Right lobe of liver (tissue), 6 donors: ENCODE measurements at regions of chr12 and their contacts with region 1.

Region 1: GRCh38 chr12:125330645-125331341 is 265.6 kb downstream of the AACS start:
- DNase-seq: peak; percentile 66 to 77 (median 73)
- ATAC-seq: peak; percentile 97 to 100 (median 98)
- H3K4me3 ChIP-seq: peak overlapping the region; percentile 13 to 51 (median 50)
- H3K27ac ChIP-seq: no peak overlapping the region
- H3K4me1 ChIP-seq: peaks cover 0 to 4% (median 0%) of the 10 kb centered on the region in 4 donors
- H3K27me3 ChIP-seq: no peaks in the 10 kb centered on the region
- CTCF ChIP-seq: peak; percentile 84 to 92 (median 89)
- POLR2A ChIP-seq: no peak

Region 2: DNA sequence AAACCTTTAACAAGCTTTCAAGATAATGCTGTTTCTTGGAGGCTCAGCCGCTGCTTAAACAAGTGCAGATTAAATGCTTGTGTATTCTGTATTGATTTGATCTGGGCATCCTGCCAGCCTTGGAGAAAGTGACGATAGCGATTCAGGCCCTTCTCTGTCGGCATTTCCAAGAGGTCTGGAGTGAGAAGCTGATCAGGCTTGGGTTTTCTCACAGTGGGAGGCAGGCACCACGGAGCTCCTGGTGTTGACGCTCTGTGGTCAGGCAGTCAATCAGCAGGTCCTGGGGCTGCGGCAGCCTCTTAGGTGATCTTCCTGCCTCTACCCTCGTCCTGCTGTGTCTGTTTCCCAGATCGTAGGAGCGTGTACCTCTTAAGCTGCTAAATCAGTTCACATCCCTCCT is 110.4 kb before region 1 on chr12:
- intact Hi-C with region 1: no loop called
- DNase-seq: peak in 2 of 3 donors; percentile 35 to 80
- ATAC-seq: peak; percentile 45 to 89 (median 76)
- H3K4me3 ChIP-seq: no peak overlapping the region
- H3K27ac ChIP-seq: no peak overlapping the region
- H3K4me1 ChIP-seq: peaks cover 0 to 9% (median 0%) of the 10 kb centered on the region in 4 donors
- H3K27me3 ChIP-seq: no peaks in the 10 kb centered on the region
- CTCF ChIP-seq: no peak
- POLR2A ChIP-seq: no peak

Region 3: DNA sequence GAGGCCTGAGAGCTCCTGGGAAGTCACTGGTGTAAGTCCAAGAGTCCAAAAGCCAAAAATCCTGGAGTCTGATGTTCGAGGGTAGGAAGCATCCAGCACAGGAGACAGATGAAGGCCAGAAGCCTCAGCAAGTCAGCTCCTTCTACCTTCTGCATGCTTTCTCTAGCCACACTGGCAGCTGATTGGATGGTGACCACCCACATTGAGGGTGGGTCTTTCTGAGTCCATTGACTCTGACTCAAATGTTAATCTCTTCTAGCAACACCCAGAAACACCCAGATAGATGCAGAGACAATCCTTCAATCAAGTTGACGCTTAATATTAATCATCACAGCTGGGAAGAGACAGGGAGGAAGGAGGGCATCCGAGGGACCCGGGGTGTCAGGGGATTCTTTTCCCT is 40.2 kb after region 1 on chr12:
- intact Hi-C with region 1: no loop called
- DNase-seq: no peak
- ATAC-seq: no peak
- H3K4me3 ChIP-seq: no peak overlapping the region
- H3K27ac ChIP-seq: no peak overlapping the region
- H3K4me1 ChIP-seq: no peaks in the 10 kb centered on the region
- H3K27me3 ChIP-seq: no peaks in the 10 kb centered on the region
- CTCF ChIP-seq: no peak
- POLR2A ChIP-seq: no peak

Region 4: DNA sequence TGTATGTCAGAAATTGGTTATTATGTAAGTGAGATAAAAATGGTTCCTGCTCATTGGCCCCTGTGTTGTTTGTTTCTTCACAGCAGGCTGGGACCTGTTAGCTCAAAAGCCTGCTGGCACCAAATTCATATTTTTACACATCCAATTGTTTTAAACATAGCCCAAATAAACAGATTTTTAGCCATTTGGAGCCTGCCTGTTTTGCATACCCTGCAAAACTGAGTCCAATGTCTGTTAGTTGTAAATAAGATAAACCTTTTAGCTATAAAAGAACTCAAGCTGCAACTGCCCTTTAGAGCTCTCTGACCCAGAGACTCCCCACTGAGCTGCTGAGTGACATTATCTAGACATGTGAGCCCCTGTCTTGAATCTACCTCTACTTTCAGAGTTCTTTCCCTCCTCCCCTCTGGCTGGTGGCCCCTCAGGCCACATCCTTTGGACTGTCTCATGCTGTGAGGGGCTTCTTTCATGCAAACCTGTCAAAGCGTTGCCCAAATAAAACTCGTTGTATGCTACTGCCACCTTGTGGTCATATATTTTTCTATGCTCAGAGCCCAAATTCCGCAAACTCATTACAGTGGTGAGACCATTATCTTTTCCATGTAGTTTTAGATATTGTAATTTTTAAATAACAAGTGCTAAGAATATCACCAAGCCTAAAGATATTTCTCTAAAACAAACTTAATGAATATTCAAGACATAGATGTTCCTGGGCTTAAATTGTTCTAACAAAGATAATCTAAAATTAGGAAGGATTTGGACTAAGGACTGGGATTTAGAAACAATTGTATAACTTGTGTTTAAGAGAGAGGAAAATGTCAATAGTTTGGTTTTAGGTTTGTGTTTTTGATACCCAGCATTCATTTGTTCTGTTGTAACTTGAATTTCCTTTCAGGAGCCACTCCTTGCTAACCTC is 72.3 kb after region 1 on chr12:
- intact Hi-C with region 1: loop called (anchors 10 kb)
- DNase-seq: no peak
- ATAC-seq: peak; percentile 58 to 73 (median 69)
- H3K4me3 ChIP-seq: no peak overlapping the region
- H3K27ac ChIP-seq: no peak overlapping the region
- H3K4me1 ChIP-seq: no peaks in the 10 kb centered on the region
- H3K27me3 ChIP-seq: no peaks in the 10 kb centered on the region
- CTCF ChIP-seq: peak; percentile 58 to 80 (median 74)
- POLR2A ChIP-seq: no peak